HEK293 (cell line): ENCODE measurements at regions of chr22 and their contacts with region 1.

Region 1: DNA sequence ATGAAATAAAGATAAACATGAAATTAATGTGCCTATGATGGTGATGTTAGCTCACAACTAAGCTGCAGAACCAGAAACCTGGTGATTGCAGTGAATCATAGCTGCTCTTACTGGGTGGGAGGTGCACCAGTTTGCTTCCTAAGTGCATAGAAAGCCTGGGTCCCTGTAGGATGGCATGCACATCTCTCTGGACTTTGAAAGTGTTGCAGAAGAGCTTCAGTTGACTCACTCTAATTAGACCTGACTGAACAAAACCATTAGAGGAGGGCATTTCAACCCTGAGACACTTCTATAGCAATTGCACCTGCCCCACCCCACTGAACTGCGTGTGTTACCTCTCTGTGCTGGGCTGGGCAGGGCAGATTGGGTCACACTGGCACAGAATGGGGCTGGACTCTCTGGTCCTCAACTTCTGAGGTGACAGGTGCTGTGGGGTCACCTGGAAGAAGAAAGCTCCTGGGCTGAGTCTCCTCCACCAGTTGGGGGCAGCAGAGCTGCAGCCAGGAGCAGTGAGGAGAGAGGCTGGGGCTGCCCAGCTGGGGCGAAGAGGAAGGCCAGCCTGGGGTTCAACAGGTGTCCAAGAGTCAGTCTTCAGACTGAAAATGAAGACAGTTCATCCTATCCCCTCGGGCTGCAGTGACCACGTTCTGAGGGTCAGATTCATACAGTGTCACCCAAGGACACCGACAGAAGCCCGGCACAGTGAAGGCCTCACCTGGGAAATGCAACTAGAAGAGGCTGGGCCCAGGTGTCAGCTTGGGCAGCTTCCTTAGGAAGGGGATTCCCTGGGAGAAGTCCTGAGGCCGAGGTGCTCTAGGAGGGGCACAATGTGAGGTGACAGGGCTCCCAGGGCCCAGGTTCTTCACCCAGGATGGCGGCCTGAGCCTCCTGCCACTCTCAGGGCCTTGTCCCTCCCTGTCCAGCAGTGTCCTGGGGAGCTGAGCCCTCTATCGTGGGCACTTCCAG is 58.1 kb downstream of the GGTLC2 start:
- H3K4me3 ChIP-seq: no peak overlapping the region
- H3K27ac ChIP-seq: no peak overlapping the region
- H3K4me1 ChIP-seq: no peaks in the 10 kb centered on the region
- CTCF ChIP-seq: 0 out of 2 replicates have a peak, but pooled peaks have one; percentile 18

Region 2: GRCh38 chr22:22687638-22688500 is 14.7 kb before region 1 on chr22:
- CTCF ChIA-PET with region 1: interaction called, 75 read pairs
- POLR2A ChIA-PET with region 1: no interaction called
- H3K4me3 ChIP-seq: no peak overlapping the region
- H3K27ac ChIP-seq: no peak overlapping the region
- H3K4me1 ChIP-seq: no peaks in the 10 kb centered on the region
- CTCF ChIP-seq: peak; percentile 46; the same call in 1 of the 2 replicates

Region 3: GRCh38 chr22:22720201-22720723 is 17.7 kb after region 1 on chr22:
- CTCF ChIA-PET with region 1: interaction called, 11 read pairs
- POLR2A ChIA-PET with region 1: no interaction called
- H3K4me3 ChIP-seq: no peak overlapping the region
- H3K27ac ChIP-seq: no peak overlapping the region
- H3K4me1 ChIP-seq: no peaks in the 10 kb centered on the region
- CTCF ChIP-seq: peak; percentile 10; the same call in 1 of the 2 replicates

Region 4: DNA sequence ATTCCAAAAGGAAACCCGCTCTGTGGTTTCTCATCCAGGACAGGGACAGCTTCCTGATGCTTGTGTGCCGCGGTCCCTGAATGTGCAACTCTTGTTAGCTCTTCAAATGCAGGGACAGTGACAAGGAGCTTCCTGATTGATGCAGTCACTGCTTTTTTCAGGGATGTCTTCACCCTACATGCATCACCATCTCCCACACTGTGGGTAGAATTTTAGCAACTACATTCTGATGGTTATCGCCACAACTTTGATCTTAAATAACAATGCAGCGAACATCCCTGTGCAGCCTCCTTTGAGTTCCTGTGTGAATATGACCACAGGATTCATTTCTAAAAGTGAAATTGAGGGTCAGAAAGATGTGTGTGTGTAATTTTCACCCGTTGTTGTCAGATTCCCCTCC is 56.9 kb after region 1 on chr22:
- CTCF ChIA-PET with region 1: no interaction called
- POLR2A ChIA-PET with region 1: no interaction called
- H3K4me3 ChIP-seq: no peak overlapping the region
- H3K27ac ChIP-seq: no peak overlapping the region
- H3K4me1 ChIP-seq: no peaks in the 10 kb centered on the region
- CTCF ChIP-seq: no peak